Left ventricle myocardium inferior (tissue), 1 donor: ENCODE measurements at regions of chr2 and their contacts with region 1.

Region 1: GRCh38 chr2:85707304-85707703 is 13.1 kb downstream of the GNLY start:
- DNase-seq: no peak
- H3K4me3 ChIP-seq: no peak overlapping the region
- H3K27ac ChIP-seq: peak overlapping the region; percentile 94
- H3K4me1 ChIP-seq: peaks cover 67% of the 10 kb centered on the region
- H3K27me3 ChIP-seq: no peaks in the 10 kb centered on the region
- CTCF ChIP-seq: peak; percentile 88

Region 2: GRCh38 chr2:85648619-85649018 is 58.7 kb before region 1 on chr2:
- intact Hi-C with region 1: loop called (anchors 10 kb)
- DNase-seq: no peak
- H3K4me3 ChIP-seq: no peak overlapping the region
- H3K27ac ChIP-seq: peak overlapping the region; percentile 54
- H3K4me1 ChIP-seq: peaks cover 16% of the 10 kb centered on the region
- H3K27me3 ChIP-seq: no peaks in the 10 kb centered on the region
- CTCF ChIP-seq: peak; percentile 57